ENCODE measurements at regions of chr14 and their contacts with region 1.

Region 1: DNA sequence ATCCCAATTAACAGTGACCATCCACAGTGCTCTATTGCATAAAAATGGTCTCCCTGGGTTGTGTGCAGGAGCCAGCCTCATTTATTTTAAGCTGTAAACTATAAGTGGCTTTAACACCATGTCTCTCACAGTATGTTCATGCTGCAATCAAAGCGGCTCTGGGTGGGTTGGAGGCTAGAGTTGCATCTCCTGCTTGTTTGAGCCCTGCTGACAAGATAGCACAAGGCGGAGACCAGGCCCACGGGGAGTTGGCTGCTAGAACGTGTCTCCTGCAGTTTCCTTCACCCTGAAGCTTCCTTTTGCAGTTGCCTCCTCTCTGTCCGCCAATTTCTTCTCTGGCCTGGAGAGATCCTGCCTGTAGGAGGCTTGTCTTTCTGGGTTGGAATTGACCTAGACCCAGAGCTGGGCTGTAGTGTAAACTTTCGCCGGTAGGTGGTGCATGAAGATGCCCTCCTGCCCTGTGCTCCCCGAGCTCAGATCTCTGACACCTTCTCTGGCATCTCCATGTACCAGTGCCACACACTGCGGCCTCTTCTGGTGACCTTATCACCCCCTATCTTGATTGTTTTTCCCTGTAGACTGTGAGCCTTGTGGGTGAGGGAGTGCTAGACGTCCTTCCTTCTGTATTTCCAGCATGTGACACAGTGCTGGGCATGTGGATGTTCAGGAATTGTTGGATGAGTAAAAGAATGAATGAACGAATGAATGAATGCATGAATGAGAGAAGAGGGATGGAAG is 10.3 kb downstream of the OTUB2 start:
- DNase-seq: peak; percentile 34
- H3K4me3 ChIP-seq: no peak overlapping the region
- H3K27ac ChIP-seq: no peak overlapping the region
- H3K27me3 ChIP-seq: no peaks in the 10 kb centered on the region
- CTCF ChIP-seq: peak; percentile 84

Region 2: DNA sequence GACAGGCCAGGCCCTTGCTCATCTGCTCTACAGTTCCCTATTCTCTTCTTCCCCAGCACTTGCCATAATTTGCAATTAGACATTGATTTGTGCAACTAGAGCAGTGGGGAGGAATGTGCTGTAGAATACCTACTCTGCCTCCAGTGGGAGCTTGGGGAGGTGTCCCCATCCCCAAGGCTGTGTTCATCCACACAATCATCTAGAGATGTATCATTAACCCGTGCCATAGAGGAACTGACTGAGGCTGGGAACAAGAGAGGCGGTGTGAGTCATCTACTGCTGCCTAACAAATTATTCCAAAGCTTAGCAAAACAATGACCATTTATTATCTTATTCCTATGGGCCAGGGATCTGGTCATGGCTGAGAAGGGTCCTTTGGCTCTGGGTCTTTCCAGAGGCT is 15.5 kb before region 1 on chr14:
- CTCF ChIA-PET with region 1: interaction called, 39 read pairs
- POLR2A ChIA-PET with region 1: no interaction called
- DNase-seq: no peak
- H3K4me3 ChIP-seq: no peak overlapping the region
- H3K27ac ChIP-seq: no peak overlapping the region
- H3K27me3 ChIP-seq: peaks cover 21% of the 10 kb centered on the region
- CTCF ChIP-seq: no peak

Region 3: GRCh38 chr14:94051115-94051514 is 14.6 kb after region 1 on chr14:
- CTCF ChIA-PET with region 1: interaction called, 65 read pairs
- POLR2A ChIA-PET with region 1: no interaction called
- DNase-seq: peak; percentile 15
- H3K4me3 ChIP-seq: no peak overlapping the region
- H3K27ac ChIP-seq: no peak overlapping the region
- H3K27me3 ChIP-seq: no peaks in the 10 kb centered on the region
- CTCF ChIP-seq: peak; percentile 57

Region 4: GRCh38 chr14:94080471-94081289 is 44.2 kb after region 1 on chr14 and contains the start of gene DDX24:
- CTCF ChIA-PET with region 1: interaction called, 11 read pairs
- POLR2A ChIA-PET with region 1: no interaction called
- DNase-seq: peak; percentile 86
- H3K4me3 ChIP-seq: peak within 1 kb of the TSS; percentile 93
- H3K27ac ChIP-seq: peak within 1 kb of the TSS; percentile 82
- H3K27me3 ChIP-seq: no peaks in the 10 kb centered on the region
- CTCF ChIP-seq: no peak
- polyA plus RNA-seq, gene DDX24: 145 and 159 TPM in 2 replicates

Region 5: GRCh38 chr14:94180655-94181271 is 144.3 kb after region 1 on chr14:
- CTCF ChIA-PET with region 1: interaction called, 23 read pairs
- POLR2A ChIA-PET with region 1: no interaction called
- DNase-seq: no peak
- H3K4me3 ChIP-seq: no peak overlapping the region
- H3K27ac ChIP-seq: no peak overlapping the region
- H3K27me3 ChIP-seq: peaks cover 11% of the 10 kb centered on the region
- CTCF ChIP-seq: peak; percentile 70

Region 6: DNA sequence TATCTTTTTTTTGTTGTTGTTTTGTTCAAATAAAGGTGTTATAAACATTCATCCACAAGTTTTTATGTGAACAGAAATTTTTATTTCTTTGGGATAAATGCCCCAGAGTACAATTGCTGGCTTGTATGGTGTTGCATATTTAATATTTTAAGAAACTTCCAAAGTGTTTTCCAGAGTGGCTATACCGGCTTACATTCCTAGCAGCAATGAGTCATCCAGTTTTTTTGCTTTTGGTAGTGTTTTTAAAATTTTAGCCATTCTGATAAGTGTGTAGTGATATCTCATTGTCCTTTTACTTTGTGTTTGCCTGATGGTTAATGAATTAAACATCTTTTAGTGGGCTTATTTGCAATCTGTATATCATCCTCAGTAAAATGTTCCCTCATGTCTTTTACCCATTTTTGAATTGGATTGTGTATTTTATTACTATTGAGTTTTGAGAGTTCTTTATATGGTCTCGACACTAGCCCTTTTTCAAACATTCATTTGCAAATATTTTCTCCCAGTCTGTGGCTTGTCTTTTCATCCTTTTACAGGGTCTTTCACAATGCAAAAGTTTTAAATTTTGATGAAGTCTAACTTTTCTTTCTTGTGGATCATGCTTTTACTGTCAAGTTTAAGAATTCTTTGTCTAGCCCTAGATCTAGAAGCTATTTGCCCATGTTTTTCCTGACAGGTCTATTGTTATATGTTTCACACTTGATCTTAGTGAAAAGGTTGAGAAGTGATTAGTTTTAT is 167.2 kb after region 1 on chr14:
- CTCF ChIA-PET with region 1: no interaction called
- POLR2A ChIA-PET with region 1: no interaction called
- DNase-seq: no peak
- H3K4me3 ChIP-seq: no peak overlapping the region
- H3K27ac ChIP-seq: no peak overlapping the region
- H3K27me3 ChIP-seq: no peaks in the 10 kb centered on the region
- CTCF ChIP-seq: no peak